SK-N-SH (cell line): ENCODE measurements at regions of chr15 and their contacts with region 1.

Region 1: GRCh38 chr15:45790325-45790943 is 155.6 kb downstream of the SQOR start:
- DNase-seq: peak; percentile 62
- H3K4me3 ChIP-seq: no peak overlapping the region
- H3K27ac ChIP-seq: no peak overlapping the region
- H3K4me1 ChIP-seq: no peaks in the 10 kb centered on the region; a peak in 1 of 4 replicates
- H3K27me3 ChIP-seq: no peaks in the 10 kb centered on the region
- CTCF ChIP-seq: peak; percentile 50
- EP300 ChIP-seq: no peak
- RAD21 ChIP-seq: peak; percentile 71

Region 2: GRCh38 chr15:45714590-45715488 is 75.6 kb before region 1 on chr15:
- CTCF ChIA-PET with region 1: interaction called, 170 read pairs
- POLR2A ChIA-PET with region 1: no interaction called
- DNase-seq: peak; percentile 56
- H3K4me3 ChIP-seq: no peak overlapping the region
- H3K27ac ChIP-seq: no peak overlapping the region
- H3K4me1 ChIP-seq: peaks cover 0 to 3% of the 10 kb centered on the region in 2 experiments; a peak in 2 of 4 replicates
- H3K27me3 ChIP-seq: no peaks in the 10 kb centered on the region
- CTCF ChIP-seq: peak; percentile 83
- EP300 ChIP-seq: no peak
- RAD21 ChIP-seq: peak; percentile 90

Region 3: DNA sequence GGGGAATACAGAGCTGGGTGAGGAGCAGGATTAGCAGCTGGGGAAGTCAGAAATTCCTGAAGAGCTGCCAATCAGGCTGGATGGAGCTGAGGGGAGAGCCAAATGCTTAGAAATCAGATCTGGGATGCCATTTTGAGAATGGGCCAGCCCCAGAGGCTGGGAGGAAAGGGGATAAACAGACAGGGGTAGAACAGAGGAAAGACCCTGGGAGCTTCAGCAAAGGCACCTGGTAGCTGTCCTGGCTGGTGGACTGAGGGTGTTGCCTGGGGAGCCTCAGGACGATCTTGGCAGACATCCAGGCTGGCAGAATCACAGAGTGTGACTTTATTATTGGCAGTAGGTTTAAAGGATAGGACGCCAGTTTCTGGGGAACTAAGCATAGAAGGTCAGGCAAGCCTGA is 57.8 kb before region 1 on chr15:
- CTCF ChIA-PET with region 1: interaction called, 25 read pairs
- POLR2A ChIA-PET with region 1: no interaction called
- DNase-seq: peak; percentile 34
- H3K4me3 ChIP-seq: no peak overlapping the region
- H3K27ac ChIP-seq: no peak overlapping the region; a peak in 1 of 4 replicates
- H3K4me1 ChIP-seq: peaks cover 0 to 20% of the 10 kb centered on the region in 2 experiments; a peak in 2 of 4 replicates
- H3K27me3 ChIP-seq: 0 out of 2 replicates have a peak, but pooled peaks cover 8% of the 10 kb centered on the region
- CTCF ChIP-seq: no peak
- EP300 ChIP-seq: no peak
- RAD21 ChIP-seq: no peak

Region 4: GRCh38 chr15:45773149-45773548 is 17.3 kb before region 1 on chr15:
- CTCF ChIA-PET with region 1: interaction called, 18 read pairs
- POLR2A ChIA-PET with region 1: no interaction called
- DNase-seq: no peak
- H3K4me3 ChIP-seq: no peak overlapping the region
- H3K27ac ChIP-seq: no peak overlapping the region
- H3K4me1 ChIP-seq: no peaks in the 10 kb centered on the region
- H3K27me3 ChIP-seq: no peaks in the 10 kb centered on the region
- CTCF ChIP-seq: no peak
- EP300 ChIP-seq: no peak
- RAD21 ChIP-seq: no peak

Region 5: GRCh38 chr15:45802140-45802539 is 11.7 kb after region 1 on chr15:
- CTCF ChIA-PET with region 1: interaction called, 38 read pairs
- POLR2A ChIA-PET with region 1: no interaction called
- DNase-seq: no peak
- H3K4me3 ChIP-seq: no peak overlapping the region
- H3K27ac ChIP-seq: no peak overlapping the region
- H3K4me1 ChIP-seq: no peaks in the 10 kb centered on the region
- H3K27me3 ChIP-seq: no peaks in the 10 kb centered on the region
- CTCF ChIP-seq: no peak
- EP300 ChIP-seq: no peak
- RAD21 ChIP-seq: no peak

Region 6: DNA sequence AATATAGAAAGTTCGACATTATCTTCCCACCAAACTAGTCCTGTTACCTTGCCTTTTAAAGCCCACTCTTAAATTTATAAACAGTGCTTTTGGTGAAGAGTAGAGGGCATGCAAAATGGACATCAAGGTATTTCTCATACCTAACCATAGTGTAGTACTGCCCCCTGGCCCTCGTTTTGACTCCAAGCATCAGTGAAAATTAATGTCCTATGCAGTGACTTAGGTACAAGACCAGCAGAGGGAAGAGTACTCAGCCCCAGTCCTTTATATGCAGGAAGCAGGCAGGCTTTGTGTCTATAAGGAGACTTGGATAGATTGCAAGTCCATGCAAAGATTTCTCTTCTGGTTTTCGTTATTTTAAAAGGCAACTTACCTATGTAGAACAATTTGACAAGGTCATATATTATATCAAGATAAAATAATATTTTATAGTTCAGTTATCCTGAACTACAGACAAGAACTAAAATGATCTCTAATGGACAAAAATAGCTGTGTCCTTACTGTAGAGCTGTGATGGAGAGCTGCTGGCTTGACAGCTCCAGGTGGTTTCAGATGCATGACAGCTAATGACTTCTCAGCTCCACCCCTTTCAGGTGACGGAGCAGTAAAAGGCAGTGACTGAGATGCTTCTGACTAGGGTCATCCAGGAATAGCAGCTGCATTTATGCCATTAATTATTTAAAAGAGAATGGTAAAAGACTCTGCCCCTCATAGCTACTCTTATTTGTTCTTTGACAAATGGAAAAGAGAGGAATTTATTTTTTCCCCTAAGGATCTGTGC is 490.5 kb after region 1 on chr15:
- CTCF ChIA-PET with region 1: interaction called, 23 read pairs
- POLR2A ChIA-PET with region 1: no interaction called
- DNase-seq: peak; percentile 23
- H3K4me3 ChIP-seq: no peak overlapping the region
- H3K27ac ChIP-seq: no peak overlapping the region
- H3K4me1 ChIP-seq: peaks cover 0 to 6% of the 10 kb centered on the region in 2 experiments; a peak in 2 of 4 replicates
- H3K27me3 ChIP-seq: no peaks in the 10 kb centered on the region
- CTCF ChIP-seq: 0 out of 2 replicates have a peak, but pooled peaks have one; percentile 8
- EP300 ChIP-seq: no peak
- RAD21 ChIP-seq: peak; percentile 81